ENCODE measurements at regions of chr2 and their contacts with region 1.

Region 1: GRCh38 chr2:191189112-191189635 is 38.4 kb upstream of the STAT4 start:
- DNase-seq: no peak
- H3K4me3 Mint-ChIP-seq: no peak overlapping the region
- H3K27ac Mint-ChIP-seq: no peak overlapping the region
- H3K4me1 Mint-ChIP-seq: peaks cover 56% of the 10 kb centered on the region
- H3K27me3 Mint-ChIP-seq: no peaks in the 10 kb centered on the region

Region 2: GRCh38 chr2:191078165-191078867 is 110.9 kb before region 1 on chr2:
- intact Hi-C with region 1: loop called (anchors 1 kb)
- DNase-seq: no peak
- H3K4me3 Mint-ChIP-seq: peak overlapping the region; percentile 60
- H3K27ac Mint-ChIP-seq: peak overlapping the region; percentile 89
- H3K4me1 Mint-ChIP-seq: peaks cover 31% of the 10 kb centered on the region
- H3K27me3 Mint-ChIP-seq: no peaks in the 10 kb centered on the region

Region 3: DNA sequence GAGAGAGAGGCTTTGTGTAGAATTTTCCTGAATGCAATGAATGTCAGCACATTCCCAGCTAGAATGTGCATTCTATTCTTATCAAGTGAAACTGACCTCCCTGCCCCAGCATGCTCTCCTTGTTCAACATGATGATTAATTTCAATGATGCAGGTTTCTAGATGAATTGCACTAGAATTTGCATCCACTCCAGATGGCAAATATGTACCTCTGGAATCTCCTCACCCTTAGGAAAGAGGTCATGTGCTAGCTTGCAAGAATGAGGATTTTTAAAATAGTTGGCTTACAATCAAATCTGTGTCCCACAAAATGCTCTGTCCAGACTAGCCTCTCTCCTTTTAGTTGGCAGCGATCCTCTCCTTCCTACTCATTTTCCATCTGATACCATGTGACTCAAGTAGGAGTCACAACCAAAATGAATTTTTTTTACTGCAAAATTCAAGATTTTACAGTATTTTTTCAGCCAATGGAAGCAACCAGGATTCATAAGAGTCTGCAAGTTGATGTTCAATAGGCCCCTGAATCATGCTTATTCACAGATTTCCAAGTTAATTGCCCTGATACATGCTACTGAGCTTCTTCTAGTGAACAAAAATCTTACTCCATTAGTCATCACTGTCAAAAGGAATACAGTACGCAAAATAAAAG is 17.3 kb before region 1 on chr2:
- intact Hi-C with region 1: loop called (anchors 1 kb)
- DNase-seq: no peak
- H3K4me3 Mint-ChIP-seq: peak overlapping the region; percentile 13
- H3K27ac Mint-ChIP-seq: peak overlapping the region; percentile 37
- H3K4me1 Mint-ChIP-seq: peaks cover 77% of the 10 kb centered on the region
- H3K27me3 Mint-ChIP-seq: no peaks in the 10 kb centered on the region

Region 4: DNA sequence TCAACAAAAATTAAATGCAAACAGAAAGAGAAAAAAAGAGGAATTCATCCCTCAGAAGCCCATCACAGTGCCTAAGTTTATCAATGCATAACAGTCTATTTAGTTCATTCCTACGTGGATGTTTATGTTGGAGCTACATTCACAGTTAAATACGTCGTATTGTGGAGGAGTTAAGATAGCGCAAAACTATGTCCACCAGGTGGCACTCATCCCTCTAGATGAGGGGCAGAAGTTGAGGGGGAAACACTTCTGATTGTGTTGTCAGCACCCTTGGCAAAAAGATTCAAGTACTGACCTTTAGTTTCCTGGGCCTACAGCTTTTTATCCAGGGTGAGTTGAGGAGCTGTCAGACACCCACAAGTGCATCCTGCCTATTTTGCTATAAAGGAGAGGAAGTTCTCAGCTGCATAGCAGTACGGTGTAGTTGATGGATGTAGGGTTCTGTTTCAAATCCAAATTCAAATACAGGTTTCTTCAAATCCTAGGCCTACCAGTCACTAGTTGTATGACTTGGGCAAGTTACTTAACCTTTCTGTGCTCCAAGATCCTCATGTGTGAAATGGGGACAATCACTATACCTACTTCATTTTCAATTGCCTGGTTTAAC is 29.2 kb after region 1 on chr2:
- intact Hi-C with region 1: loop called (anchors 1 kb)
- DNase-seq: no peak
- H3K4me3 Mint-ChIP-seq: no peak overlapping the region
- H3K27ac Mint-ChIP-seq: no peak overlapping the region
- H3K4me1 Mint-ChIP-seq: peaks cover 29% of the 10 kb centered on the region
- H3K27me3 Mint-ChIP-seq: no peaks in the 10 kb centered on the region

Region 5: DNA sequence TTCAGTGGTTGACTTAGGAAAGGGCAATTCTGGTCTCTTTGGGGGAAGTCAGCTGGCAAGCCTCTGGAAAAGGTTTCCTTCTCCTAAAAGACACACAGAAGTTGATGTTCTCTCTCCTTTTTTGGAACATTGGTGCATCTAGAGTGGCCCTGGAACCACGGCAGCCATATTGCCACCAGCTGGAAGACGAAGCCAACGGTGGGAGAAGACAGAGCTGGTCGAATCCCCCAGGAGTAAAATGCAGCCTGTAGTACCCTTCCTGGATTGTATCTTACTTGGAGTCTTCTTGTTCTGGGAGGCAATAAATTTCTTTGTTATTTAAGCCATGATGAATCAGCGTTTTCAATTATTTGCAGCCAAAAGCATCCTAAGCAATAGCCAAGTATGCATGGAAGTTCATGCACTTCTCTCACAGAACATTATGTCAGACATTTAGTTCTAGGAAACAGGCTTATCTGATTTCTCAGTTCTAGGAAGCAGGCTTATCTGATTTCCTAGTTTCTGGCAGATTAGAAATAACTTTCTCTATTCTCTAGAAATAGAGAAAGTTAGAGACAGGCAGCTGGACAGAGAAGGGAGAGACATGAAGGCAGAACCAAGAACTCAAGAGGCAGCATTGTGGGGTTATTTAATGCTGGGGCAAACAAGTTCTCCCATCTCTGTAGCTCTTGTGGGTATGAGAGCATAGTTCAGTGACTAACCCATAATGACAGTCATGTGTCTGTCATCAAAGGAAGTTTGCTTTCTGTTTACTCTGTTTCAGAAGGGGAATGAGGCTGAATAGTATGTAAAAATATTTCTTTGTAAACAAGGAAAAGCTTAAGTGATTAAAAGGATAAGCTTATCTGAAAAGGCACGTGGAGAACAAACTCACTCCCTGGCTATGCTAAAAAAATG is 448.3 kb after region 1 on chr2:
- intact Hi-C with region 1: loop called (anchors 5 kb)
- DNase-seq: no peak
- H3K4me3 Mint-ChIP-seq: peak overlapping the region; percentile 75
- H3K27ac Mint-ChIP-seq: peak overlapping the region; percentile 84
- H3K4me1 Mint-ChIP-seq: peaks cover 56% of the 10 kb centered on the region
- H3K27me3 Mint-ChIP-seq: peaks cover 1% of the 10 kb centered on the region

Measured in activated T-helper 1 cell treated with anti-CD3 and anti-CD28 coated beads, Interleukin-12 subunit alpha, Interleukin-12 subunit beta, Interleukin-2, Interleukin-4 antibody, amounts not matched to agents 30 ng/mL and 10 ng/mL and 1 ng/mL, durations not matched to agents 14 hours and 24 hours and 36 hours (primary cell).